ENCODE measurements at regions of chr1 and their contacts with region 1.

Region 1: GRCh38 chr1:13662493-13662892 is 37.5 kb upstream of the PRDM2 start:
- DNase-seq: no peak
- H3K4me3 ChIP-seq: no peak overlapping the region
- H3K4me3 Mint-ChIP-seq: no peak overlapping the region
- H3K27ac ChIP-seq: no peak overlapping the region
- H3K27ac Mint-ChIP-seq: no peak overlapping the region
- H3K4me1 ChIP-seq: no peaks in the 10 kb centered on the region
- H3K4me1 Mint-ChIP-seq: peaks cover 2 to 8% (median 4%) of the 10 kb centered on the region in 4 donors
- H3K27me3 ChIP-seq: no peaks in the 10 kb centered on the region
- H3K27me3 Mint-ChIP-seq: peaks cover 2 to 5% of the 10 kb centered on the region in 2 donors

Region 2: GRCh38 chr1:13813398-13814012 is 151.0 kb after region 1 on chr1:
- CTCF ChIA-PET with region 1: interaction called, 24 read pairs
- POLR2A ChIA-PET with region 1: no interaction called
- intact Hi-C with region 1: loop called (anchors 1 kb)
- DNase-seq: peak in 4 of 5 donors; percentile 38 to 48 (median 44)
- H3K4me3 ChIP-seq: no peak overlapping the region
- H3K4me3 Mint-ChIP-seq: peak overlapping the region in 1 of 8 donors; percentile 4
- H3K27ac ChIP-seq: no peak overlapping the region
- H3K27ac Mint-ChIP-seq: peak overlapping the region in 5 of 7 donors; percentile 4 to 59 (median 16)
- H3K4me1 ChIP-seq: peaks cover 9% of the 10 kb centered on the region
- H3K4me1 Mint-ChIP-seq: peaks cover 17 to 41% (median 29%) of the 10 kb centered on the region in 4 donors
- H3K27me3 ChIP-seq: no peaks in the 10 kb centered on the region
- H3K27me3 Mint-ChIP-seq: no peaks in the 10 kb centered on the region

Region 3: DNA sequence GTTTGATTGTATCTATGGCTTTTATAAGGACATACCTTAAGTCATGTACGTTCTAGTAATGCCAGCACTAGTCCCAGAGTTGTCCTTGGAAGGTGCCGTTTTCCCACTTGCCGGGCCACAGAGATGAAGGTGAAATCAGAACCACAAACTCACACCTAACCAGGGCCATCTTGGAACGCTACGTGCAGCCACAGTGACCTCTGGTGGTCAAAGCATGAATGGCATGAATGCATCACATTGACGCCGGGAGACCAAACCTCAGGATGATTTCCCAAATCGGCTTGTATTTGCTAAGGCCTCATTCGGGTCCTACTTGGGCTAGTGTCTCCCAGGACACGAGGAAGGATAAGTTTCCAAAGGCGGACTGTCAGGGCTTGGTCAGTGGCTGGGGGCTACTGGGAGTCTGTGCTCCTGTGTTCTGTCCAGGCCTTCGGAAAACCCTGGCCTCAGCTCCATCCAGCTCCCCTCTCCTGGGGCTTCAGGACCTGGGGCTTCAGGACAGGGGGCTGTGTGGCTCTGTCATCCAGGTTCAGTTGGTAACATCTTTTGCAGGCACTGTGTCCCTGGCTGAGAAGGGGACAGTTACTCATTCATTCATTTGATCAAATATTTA is 298.0 kb after region 1 on chr1:
- CTCF ChIA-PET with region 1: interaction called, 10 read pairs
- POLR2A ChIA-PET with region 1: no interaction called
- intact Hi-C with region 1: no loop called
- DNase-seq: peak; percentile 37 to 56 (median 46)
- H3K4me3 ChIP-seq: no peak overlapping the region
- H3K4me3 Mint-ChIP-seq: no peak overlapping the region
- H3K27ac ChIP-seq: no peak overlapping the region
- H3K27ac Mint-ChIP-seq: no peak overlapping the region
- H3K4me1 ChIP-seq: no peaks in the 10 kb centered on the region
- H3K4me1 Mint-ChIP-seq: peaks cover 0 to 3% (median 0%) of the 10 kb centered on the region in 4 donors
- H3K27me3 ChIP-seq: no peaks in the 10 kb centered on the region
- H3K27me3 Mint-ChIP-seq: peaks cover 22 to 47% of the 10 kb centered on the region in 2 donors